ENCODE measurements at regions of chr13 and their contacts with region 1.

Region 1: DNA sequence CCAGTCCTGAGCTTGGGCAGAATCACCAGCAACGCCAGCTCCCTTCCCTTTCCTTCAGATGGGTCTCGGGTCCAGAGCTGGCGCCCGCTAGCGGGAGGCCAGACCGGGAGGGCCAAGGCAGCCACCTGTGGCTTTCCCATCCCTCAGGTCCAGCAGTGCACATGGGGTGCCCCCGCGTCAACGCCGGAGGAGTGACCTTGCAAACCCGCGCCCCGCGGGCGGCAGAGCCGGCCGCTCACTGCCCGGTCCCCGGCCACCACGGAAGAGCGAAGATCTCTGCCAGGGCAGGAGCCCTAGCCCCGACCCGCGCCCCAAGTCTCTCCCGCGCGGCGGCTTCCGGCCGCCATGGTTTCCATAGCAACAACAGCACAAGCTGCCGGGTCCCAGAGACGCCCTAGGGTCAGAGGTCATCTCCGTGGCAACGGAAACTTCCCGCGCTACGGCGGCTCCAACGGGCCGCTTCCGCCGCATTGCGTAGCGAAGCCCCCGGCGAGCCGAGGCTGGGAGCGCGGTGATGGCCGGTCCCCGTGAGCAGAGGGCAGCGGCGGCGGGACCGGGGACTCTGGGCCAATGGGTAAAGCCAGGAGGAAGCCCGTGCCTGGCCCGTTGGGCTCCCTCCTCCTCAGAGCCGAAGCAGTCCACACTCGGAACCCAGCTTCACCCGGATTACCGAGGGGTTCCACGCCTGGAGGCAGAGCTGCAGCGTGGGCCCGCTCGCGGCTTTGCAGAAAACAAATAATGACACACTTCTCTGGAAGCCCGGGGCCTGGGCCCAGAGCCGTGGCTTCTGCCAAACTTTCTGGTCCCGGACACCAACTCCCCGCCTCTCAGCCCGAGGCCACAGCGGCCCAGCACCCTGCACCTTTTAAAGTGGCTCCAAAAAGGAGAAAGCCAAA is 7.4 kb downstream of the FGF14 start:
- DNase-seq: peak; percentile 81 to 84
- ATAC-seq: peak; percentile 89 to 93
- H3K4me3 ChIP-seq: peak overlapping the region; percentile 82 to 98 (median 92)
- H3K27ac ChIP-seq: peak overlapping the region; percentile 65 to 77 (median 71)
- H3K4me1 ChIP-seq: peaks cover 4 to 9% of the 10 kb centered on the region in 2 donors
- H3K27me3 ChIP-seq: peaks cover 0 to 3% (median 0%) of the 10 kb centered on the region in 3 donors
- CTCF ChIP-seq: no peak
- POLR2A ChIP-seq: no peak

Region 2: DNA sequence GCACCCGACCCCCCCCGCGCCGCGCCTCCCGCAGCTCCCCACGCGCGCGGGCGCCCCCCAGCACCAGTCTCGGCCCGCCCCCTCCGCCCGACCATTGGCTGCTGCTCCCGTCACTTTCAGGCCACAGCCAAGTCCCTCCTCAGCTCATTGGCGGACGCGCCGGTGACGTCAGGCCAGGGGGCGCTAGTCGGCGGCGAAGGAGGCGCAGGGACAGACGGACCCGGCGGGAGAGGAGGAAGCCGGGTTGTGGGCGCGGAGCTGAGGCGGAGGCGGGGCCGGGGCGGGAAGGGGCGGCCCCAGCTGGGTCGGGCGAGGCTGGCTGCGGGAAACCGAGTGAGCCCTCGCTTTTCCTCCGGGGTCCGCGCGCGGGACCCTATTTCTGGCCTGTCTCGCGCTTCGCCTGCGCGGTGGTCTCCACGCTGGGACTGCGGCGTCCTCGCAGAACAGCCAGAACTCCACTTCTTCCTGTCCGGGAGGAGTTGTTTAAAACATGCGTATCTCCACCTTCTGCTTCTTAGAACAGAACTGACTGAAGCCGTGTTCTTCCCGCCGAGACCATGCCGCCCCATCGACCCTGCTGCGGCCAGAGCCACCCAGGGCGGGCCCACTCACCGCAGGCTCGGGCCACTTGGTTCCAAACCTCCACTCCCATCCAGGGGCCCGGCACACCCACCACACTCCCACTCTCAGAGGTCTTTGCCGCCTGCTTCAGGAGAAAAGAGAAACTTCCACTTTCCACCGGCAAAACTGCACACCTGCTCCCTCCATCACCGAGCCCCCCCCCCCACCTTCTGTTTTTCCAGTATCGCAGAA is 1719.4 kb before region 1 on chr13:
- in situ Hi-C with region 1: no loop called
- intact Hi-C with region 1: loop called (anchors 10 kb)
- DNase-seq: peak; percentile 98 to 99
- ATAC-seq: peak; percentile 94 to 95
- H3K4me3 ChIP-seq: peak overlapping the region; percentile 70 to 92 (median 76)
- H3K27ac ChIP-seq: peak overlapping the region; percentile 71 to 83 (median 78)
- H3K4me1 ChIP-seq: peaks cover 4 to 12% of the 10 kb centered on the region in 2 donors
- H3K27me3 ChIP-seq: no peaks in the 10 kb centered on the region
- CTCF ChIP-seq: peak in 2 of 5 experiments; percentile 35 to 40
- POLR2A ChIP-seq: peak; percentile 59 to 79

Region 3: DNA sequence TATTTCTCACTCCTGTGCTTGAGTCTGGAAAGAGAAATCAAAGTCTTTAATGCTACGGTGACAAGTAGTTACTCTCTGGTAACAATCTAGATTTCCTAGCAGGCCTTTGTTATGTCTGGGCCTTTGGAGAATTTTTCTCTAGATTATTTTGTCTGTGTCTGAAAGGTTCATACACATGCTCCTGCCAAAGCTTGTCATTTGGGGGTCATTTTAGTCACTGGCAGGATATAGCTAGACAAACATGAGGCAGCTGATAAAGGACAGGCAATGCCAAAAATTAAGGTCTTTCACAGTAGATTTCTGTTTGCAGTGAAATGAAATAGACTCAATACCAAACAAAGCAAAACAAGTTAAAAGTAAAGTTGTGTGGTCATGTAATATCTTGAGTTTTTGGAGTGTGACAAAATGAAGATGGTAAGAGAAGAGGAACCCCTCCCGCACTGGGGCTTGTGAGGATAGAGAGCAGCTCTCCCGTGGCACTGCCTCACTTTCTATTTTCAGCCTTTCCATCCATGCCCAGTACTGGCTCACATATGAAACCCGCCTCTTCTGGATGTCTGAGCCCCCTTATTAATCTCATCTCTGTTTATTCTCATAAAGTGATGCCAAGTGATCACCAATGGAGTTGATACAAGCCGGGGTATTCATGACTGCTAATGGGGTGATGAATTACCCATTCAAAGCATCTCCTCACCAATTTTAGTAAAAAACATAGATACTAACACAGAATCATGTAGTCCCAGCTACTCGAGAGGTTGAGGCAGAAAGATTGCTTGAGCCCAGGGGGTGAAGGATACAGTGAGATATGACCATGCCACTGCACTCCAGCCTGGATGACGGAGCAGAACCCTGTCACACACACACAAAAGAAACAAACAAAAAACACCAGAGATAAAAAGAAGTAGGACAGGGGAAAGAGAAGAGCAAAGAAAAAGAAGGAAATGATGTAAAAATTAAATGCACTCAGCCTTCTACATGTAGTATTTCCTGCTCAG is 381.8 kb before region 1 on chr13:
- in situ Hi-C with region 1: no loop called
- intact Hi-C with region 1: loop called (anchors 10 kb)
- DNase-seq: peak; percentile 19 to 59
- ATAC-seq: peak; percentile 95 to 98
- H3K4me3 ChIP-seq: peak overlapping the region in 1 of 4 donors; percentile 2
- H3K27ac ChIP-seq: peak overlapping the region; percentile 75 to 84 (median 78)
- H3K4me1 ChIP-seq: peaks cover 20 to 29% of the 10 kb centered on the region in 2 donors
- H3K27me3 ChIP-seq: no peaks in the 10 kb centered on the region
- CTCF ChIP-seq: no peak
- POLR2A ChIP-seq: peak in 1 of 2 donors; percentile 48

Region 4: DNA sequence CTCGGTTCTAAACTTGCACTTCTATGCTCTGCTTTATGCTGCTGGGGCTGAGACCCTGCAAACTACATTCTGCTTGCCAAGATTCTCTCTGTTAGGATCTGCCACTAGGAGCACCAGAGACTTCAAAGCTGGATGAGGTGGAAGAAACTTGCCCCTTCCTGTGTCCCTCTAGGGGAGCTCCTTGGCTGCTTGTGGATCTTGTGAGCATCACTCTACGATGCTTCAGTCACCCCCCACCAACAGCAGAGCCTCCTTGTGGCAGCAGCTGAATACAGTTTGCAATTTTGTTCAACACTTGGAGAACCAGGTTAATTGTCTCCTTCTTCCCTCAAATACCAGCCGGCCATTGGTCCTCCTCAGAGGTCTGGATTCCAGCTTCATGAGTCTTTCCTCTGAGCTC is 303.2 kb before region 1 on chr13:
- in situ Hi-C with region 1: no loop called
- intact Hi-C with region 1: loop called (anchors 2 kb)
- DNase-seq: no peak
- ATAC-seq: no peak
- H3K4me3 ChIP-seq: no peak overlapping the region
- H3K27ac ChIP-seq: no peak overlapping the region
- H3K4me1 ChIP-seq: peaks cover 8 to 10% of the 10 kb centered on the region in 2 donors
- H3K27me3 ChIP-seq: no peaks in the 10 kb centered on the region
- CTCF ChIP-seq: no peak
- POLR2A ChIP-seq: no peak

Region 5: GRCh38 chr13:102317593-102317992 is 76.8 kb before region 1 on chr13:
- in situ Hi-C with region 1: no loop called
- intact Hi-C with region 1: loop called (anchors 2 kb)
- DNase-seq: peak; percentile 42 to 70
- ATAC-seq: peak; percentile 60 to 66
- H3K4me3 ChIP-seq: no peak overlapping the region
- H3K27ac ChIP-seq: peak overlapping the region in 1 of 4 donors; percentile 43
- H3K4me1 ChIP-seq: peaks cover 0 to 6% of the 10 kb centered on the region in 2 donors
- H3K27me3 ChIP-seq: no peaks in the 10 kb centered on the region
- CTCF ChIP-seq: no peak
- POLR2A ChIP-seq: no peak

Region 6: DNA sequence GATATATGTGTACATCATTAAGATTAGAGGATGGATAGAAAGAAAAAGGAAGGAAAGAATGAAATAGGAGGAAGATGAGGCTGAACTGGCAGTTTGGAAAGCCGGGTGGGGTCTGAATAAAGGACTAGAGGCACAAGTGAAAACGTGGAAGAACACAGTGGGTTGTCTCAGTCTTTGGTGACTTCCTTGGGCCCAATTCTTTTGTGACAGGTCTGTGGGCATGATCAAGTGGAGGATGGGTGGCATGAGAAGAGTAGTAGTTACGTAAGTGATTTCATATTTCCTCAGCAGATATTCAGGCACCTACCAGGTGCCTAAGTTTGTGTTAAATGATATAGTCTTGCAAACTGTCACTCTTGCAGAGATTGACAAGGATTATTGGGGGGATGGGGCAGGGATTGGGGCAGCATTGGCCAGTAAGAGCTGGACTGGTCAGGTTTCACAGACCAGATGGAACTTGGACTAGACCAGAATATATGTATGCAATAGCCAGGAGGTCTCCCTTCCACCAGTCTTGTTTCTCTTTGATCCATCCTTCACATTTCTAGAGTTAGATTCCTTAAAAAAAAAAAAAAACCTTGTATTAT is 205.1 kb after region 1 on chr13:
- in situ Hi-C with region 1: no loop called
- intact Hi-C with region 1: no loop called
- DNase-seq: no peak
- ATAC-seq: no peak
- H3K4me3 ChIP-seq: no peak overlapping the region
- H3K27ac ChIP-seq: peak overlapping the region in 1 of 4 donors; percentile 18
- H3K4me1 ChIP-seq: peaks cover 48 to 54% of the 10 kb centered on the region in 2 donors
- H3K27me3 ChIP-seq: no peaks in the 10 kb centered on the region
- CTCF ChIP-seq: no peak
- POLR2A ChIP-seq: no peak

Measured in gastrocnemius medialis (tissue), 4 donors.